ENCODE measurements at regions of chr3 and their contacts with region 1.

Region 1: GRCh38 chr3:132062535-132062934 is 27.7 kb upstream of the CPNE4 start:
- DNase-seq: no peak
- H3K4me3 ChIP-seq: no peak overlapping the region
- H3K27ac ChIP-seq: no peak overlapping the region
- H3K4me1 ChIP-seq: no peaks in the 10 kb centered on the region
- H3K27me3 ChIP-seq: no peaks in the 10 kb centered on the region
- CTCF ChIP-seq: no peak
- EP300 ChIP-seq: no peak
- POLR2A ChIP-seq: no peak

Region 2: GRCh38 chr3:132047209-132047608 is 15.3 kb before region 1 on chr3:
- intact Hi-C with region 1: loop called in 1 of 4 experiments (anchors 2 kb)
- DNase-seq: no peak
- H3K4me3 ChIP-seq: no peak overlapping the region
- H3K27ac ChIP-seq: no peak overlapping the region
- H3K4me1 ChIP-seq: no peaks in the 10 kb centered on the region
- H3K27me3 ChIP-seq: no peaks in the 10 kb centered on the region
- CTCF ChIP-seq: no peak
- EP300 ChIP-seq: no peak
- POLR2A ChIP-seq: no peak